ENCODE measurements at regions of chr7 and their contacts with region 1.

Region 1: DNA sequence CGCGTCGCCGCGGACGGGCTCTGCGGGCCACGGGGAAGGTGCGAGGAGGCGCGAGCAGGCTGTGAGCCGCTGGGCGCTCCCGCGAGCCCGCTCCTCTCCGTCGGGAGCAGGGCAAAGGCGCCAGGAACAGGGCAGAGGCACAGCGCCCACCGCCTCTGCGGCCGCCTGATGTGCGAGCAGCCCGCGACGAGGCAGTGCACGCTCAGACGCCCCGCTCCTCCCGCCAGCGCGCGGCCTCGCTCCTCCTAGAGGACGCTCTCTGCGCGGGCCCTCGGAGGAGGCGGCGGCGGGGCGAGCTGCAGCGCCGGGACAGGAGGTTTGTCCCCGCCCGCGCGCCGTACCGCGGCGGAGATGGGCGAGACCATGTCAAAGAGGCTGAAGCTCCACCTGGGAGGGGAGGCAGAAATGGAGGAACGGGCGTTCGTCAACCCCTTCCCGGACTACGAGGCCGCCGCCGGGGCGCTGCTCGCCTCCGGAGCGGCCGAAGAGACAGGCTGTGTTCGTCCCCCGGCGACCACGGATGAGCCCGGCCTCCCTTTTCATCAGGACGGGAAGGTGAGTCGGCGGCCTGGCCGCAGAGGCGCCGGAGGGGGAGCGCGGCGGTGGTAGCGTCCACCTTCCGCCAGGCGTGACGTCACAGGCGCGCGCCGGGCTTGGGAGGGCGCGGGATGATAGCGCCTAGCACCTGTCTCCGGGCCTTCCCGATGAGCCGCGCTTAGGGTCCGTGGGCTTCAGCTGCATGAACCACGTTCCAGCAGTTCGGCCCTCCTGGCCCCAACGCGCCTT is 731 bp downstream of the LANCL2 start:
- DNase-seq: peak; percentile 93
- ATAC-seq: peak; percentile 85
- H3K4me3 ChIP-seq: peak overlapping the region; percentile 84 to 96
- H3K27ac ChIP-seq: peak overlapping the region; percentile 97
- H3K4me1 ChIP-seq: peaks cover 3 to 19% of the 10 kb centered on the region in 2 experiments; a peak in 3 of 4 replicates
- H3K27me3 ChIP-seq: no peaks in the 10 kb centered on the region
- CTCF ChIP-seq: peak in 1 of 3 experiments; percentile 34; a peak in 1 of 6 replicates
- POLR2A ChIP-seq: peak; percentile 55
- RAD21 ChIP-seq: no peak

Region 2: DNA sequence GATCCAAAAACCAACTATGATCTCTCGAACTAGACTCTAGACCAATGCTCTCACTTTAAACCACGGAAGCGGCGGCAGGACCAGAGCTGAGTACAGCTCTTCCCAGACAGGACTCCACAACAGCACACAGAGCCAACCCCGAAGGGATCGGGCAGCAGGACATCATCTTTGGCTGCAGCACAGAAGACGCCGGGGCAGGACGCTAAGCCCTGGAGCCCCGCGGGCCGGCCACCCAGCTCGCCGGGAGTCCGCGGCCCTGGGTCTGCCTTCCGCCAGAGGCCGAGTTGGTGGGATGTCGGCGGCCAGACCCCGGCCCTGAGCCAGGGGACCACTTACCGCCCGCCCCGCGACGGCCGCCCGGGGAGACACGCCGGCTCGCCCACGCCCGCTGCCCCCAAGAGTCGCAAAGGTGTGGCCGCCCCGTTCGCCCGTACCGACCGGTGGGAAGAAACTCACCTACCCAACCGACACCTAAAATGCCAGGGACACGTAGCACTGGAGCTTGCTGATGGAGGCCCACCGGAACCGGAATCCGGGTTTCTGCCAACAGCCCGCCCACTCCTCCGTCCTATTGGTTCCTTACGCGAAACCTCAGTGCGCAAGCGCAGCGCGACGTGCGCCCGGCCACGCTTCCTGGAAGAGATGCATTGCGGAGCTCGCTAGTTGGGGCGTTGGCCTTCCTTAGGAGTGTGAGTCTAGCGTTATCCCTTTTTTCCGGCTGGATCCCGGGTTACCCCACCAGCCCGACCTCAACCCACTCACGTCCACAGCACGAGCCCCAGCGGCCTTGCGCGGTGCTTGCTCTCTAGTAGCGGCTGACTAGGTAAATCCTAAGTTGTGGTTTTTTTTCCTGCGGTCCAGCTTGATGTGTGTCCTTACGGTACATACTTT is 606.9 kb before region 1 on chr7 and contains the start of gene SEC61G:
- CTCF ChIA-PET with region 1: no interaction called
- POLR2A ChIA-PET with region 1: interaction called, 3 read pairs
- RAD21 ChIA-PET with region 1: no interaction called
- intact Hi-C with region 1: loop called (anchors 5 kb)
- DNase-seq: peak; percentile 94
- ATAC-seq: peak; percentile 96
- H3K4me3 ChIP-seq: peak within 1 kb of the TSS; percentile 90 to 95
- H3K27ac ChIP-seq: peak within 1 kb of the TSS; percentile 87
- H3K4me1 ChIP-seq: peaks cover 8 to 17% of the 10 kb centered on the region in 2 experiments
- H3K27me3 ChIP-seq: no peaks in the 10 kb centered on the region
- CTCF ChIP-seq: no peak
- POLR2A ChIP-seq: peak; percentile 95
- RAD21 ChIP-seq: no peak
- total RNA-seq, gene SEC61G: 147 TPM

Region 3: GRCh38 chr7:54802841-54803240 is 563.0 kb before region 1 on chr7:
- CTCF ChIA-PET with region 1: no interaction called
- POLR2A ChIA-PET with region 1: no interaction called
- RAD21 ChIA-PET with region 1: no interaction called
- intact Hi-C with region 1: no loop called
- DNase-seq: no peak
- ATAC-seq: no peak
- H3K4me3 ChIP-seq: no peak overlapping the region
- H3K27ac ChIP-seq: no peak overlapping the region
- H3K4me1 ChIP-seq: peaks cover 0 to 3% of the 10 kb centered on the region in 2 experiments; a peak in 1 of 4 replicates
- H3K27me3 ChIP-seq: no peaks in the 10 kb centered on the region
- CTCF ChIP-seq: no peak
- POLR2A ChIP-seq: no peak
- RAD21 ChIP-seq: no peak

Region 4: DNA sequence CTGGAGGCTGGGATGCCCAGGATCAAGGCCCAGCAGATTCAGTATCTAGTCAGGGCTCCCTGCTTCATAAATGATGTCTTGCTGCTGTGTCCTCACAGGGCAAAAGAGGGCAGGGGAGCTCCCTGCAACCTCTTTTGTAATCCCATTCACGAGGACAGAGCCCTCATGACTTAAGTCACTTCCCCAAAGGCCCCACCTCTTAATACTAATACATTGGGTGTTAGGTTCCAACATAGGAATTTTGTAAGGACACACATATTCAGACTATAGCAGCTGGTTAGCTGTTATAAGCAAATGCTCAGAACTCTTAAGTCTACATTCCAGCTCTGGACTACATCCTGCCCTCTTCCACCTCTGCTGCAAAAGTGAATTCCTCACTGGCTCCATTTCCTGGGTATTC is 143.5 kb after region 1 on chr7:
- CTCF ChIA-PET with region 1: no interaction called
- POLR2A ChIA-PET with region 1: no interaction called
- RAD21 ChIA-PET with region 1: no interaction called
- intact Hi-C with region 1: no loop called
- DNase-seq: no peak
- ATAC-seq: no peak
- H3K4me3 ChIP-seq: no peak overlapping the region
- H3K27ac ChIP-seq: no peak overlapping the region
- H3K4me1 ChIP-seq: peaks cover 8 to 16% of the 10 kb centered on the region in 2 experiments; a peak in 3 of 4 replicates
- H3K27me3 ChIP-seq: no peaks in the 10 kb centered on the region
- CTCF ChIP-seq: no peak
- POLR2A ChIP-seq: no peak
- RAD21 ChIP-seq: no peak

Region 5: DNA sequence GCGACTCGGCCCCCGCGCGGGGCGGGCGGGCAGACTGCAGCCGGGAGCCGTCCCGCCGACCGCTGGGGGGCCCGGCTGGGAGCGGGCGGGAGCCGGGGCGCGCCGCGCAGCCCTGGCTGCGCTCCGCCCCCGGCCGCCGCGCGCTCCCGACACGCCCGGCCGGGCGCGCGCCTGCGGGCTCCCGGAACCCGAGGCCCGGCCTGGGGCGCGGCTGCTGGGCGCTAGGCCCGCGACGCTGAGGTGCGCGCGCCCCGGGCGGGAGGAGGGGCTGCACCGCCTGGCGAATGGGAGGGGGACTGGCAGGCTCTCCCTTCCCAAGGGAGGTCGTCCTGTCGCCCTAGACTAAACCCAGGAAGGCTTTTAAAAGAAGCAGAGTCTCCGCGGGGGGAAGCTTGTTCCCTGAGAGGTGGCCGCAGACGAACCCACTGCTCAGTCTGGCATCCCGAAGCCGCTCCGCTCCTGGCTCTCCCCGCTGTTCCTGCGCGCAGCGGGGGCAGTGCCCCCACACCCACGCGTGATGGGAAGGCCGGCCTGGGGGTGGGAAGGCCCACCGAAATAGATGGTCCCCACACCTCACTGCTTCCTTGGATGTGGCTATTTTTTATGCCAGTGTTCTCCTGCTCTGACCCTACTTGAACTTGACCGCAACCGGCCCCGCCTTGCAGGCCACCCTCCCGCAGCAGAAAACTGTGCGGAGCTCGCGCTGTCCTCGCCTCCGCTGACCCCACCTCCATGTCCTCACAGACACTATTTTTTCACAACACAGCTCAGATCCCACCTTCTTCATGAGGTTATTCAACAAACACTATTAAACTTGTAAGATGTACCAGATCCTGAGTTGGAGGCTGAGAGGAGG is 206.7 kb after region 1 on chr7 and contains the start of gene VOPP1:
- CTCF ChIA-PET with region 1: no interaction called
- POLR2A ChIA-PET with region 1: no interaction called
- RAD21 ChIA-PET with region 1: no interaction called
- intact Hi-C with region 1: loop called (anchors 5 kb)
- DNase-seq: no peak
- ATAC-seq: peak; percentile 80
- H3K4me3 ChIP-seq: peak within 1 kb of the TSS; percentile 69 to 87
- H3K27ac ChIP-seq: peak within 1 kb of the TSS; percentile 65
- H3K4me1 ChIP-seq: peaks cover 21 to 41% of the 10 kb centered on the region in 2 experiments
- H3K27me3 ChIP-seq: no peaks in the 10 kb centered on the region
- CTCF ChIP-seq: no peak
- POLR2A ChIP-seq: no peak
- RAD21 ChIP-seq: no peak
- total RNA-seq, gene VOPP1: 30.3 TPM